Naive thymus-derived CD8-positive, alpha-beta T cell (primary cell): ENCODE measurements at regions of chr10 and their contacts with region 1.

Region 1: GRCh38 chr10:119872860-119873681 is 428 bp upstream of the MCMBP start:
- DNase-seq: peak; percentile 76 to 91 (median 85)
- ATAC-seq: peak; percentile 89 to 91
- H3K4me3 Mint-ChIP-seq: peak overlapping the region; percentile 83 to 94 (median 88)
- H3K27ac Mint-ChIP-seq: peak overlapping the region; percentile 54 to 96 (median 94)
- H3K4me1 Mint-ChIP-seq: peaks cover 19 to 44% (median 34%) of the 10 kb centered on the region in 4 donors
- H3K27me3 Mint-ChIP-seq: no peaks in the 10 kb centered on the region

Region 2: DNA sequence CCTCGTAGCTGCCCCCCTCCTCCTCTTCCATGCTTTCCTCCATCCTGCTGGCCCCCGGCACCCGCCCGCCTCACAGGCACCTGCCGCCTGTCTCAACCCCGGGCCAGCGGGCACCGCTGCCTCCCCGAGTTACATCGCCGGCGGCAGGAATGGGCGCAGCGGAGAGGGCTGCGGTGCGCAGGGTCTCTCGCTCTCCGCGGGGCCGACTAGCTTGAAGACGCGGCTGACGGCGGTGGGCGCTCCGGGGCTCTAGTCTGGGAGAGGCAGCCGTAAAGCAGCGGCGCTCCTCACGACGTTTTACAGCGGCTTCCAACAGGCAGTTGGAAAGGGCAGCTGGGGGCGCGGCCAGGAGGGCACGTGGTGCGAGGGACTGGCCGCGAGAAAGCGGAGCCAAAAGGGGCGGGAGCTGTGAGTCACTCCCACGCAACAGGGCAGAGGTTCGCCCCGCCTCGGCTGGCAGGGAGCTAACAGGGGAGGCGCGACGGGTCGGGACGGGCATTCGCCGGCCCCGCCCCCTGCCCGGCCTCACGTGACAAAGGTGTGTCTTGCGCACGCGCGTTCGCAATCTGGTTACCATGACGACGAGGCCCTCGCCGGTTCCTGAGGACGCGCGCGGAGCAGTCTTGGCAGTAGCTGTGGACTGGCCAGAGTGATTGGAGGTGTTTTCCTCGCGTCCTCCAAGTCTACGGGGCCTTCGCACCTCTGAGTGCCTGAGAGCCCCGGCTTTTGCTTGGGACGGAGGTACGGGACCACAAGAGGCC is 1118.2 kb before region 1 on chr10 and contains the start of gene CACUL1:
- POLR2A ChIA-PET with region 1: interaction called, 10 read pairs
- DNase-seq: peak; percentile 98 to 100 (median 100)
- ATAC-seq: peak; percentile 94 to 97
- H3K4me3 Mint-ChIP-seq: peak within 1 kb of the TSS; percentile 89 to 98 (median 92)
- H3K27ac Mint-ChIP-seq: peak within 1 kb of the TSS; percentile 85 to 97 (median 95)
- H3K4me1 Mint-ChIP-seq: peaks cover 22 to 44% (median 41%) of the 10 kb centered on the region in 4 donors
- H3K27me3 Mint-ChIP-seq: peaks cover 0 to 4% (median 0%) of the 10 kb centered on the region in 5 donors
- polyA plus RNA-seq, gene CACUL1: 23.1 to 29.2 (median 25.4) TPM

Region 3: GRCh38 chr10:119650692-119651513 is 222.2 kb before region 1 on chr10 and contains the start of gene BAG3:
- POLR2A ChIA-PET with region 1: interaction called, 12 read pairs
- DNase-seq: peak; percentile 34 to 86 (median 72)
- ATAC-seq: peak; percentile 57 to 64
- H3K4me3 Mint-ChIP-seq: peak within 1 kb of the TSS; percentile 94 to 99 (median 97)
- H3K27ac Mint-ChIP-seq: peak within 1 kb of the TSS; percentile 90 to 99 (median 97)
- H3K4me1 Mint-ChIP-seq: peaks cover 28 to 45% (median 44%) of the 10 kb centered on the region in 4 donors
- H3K27me3 Mint-ChIP-seq: no peaks in the 10 kb centered on the region
- polyA plus RNA-seq, gene BAG3: 5.1 to 26.5 (median 12.5) TPM

Region 4: GRCh38 chr10:119725828-119726675 is 147.0 kb before region 1 on chr10 and contains the start of gene INPP5F:
- POLR2A ChIA-PET with region 1: interaction called, 22 read pairs
- DNase-seq: peak; percentile 90 to 99 (median 96)
- ATAC-seq: peak; percentile 88 to 92
- H3K4me3 Mint-ChIP-seq: peak within 1 kb of the TSS; percentile 81 to 94 (median 91)
- H3K27ac Mint-ChIP-seq: peak within 1 kb of the TSS; percentile 27 to 93 (median 81)
- H3K4me1 Mint-ChIP-seq: peaks cover 5 to 41% (median 26%) of the 10 kb centered on the region in 4 donors
- H3K27me3 Mint-ChIP-seq: no peaks in the 10 kb centered on the region
- polyA plus RNA-seq, gene INPP5F: 1.4 to 2.5 (median 2.4) TPM

Region 5: DNA sequence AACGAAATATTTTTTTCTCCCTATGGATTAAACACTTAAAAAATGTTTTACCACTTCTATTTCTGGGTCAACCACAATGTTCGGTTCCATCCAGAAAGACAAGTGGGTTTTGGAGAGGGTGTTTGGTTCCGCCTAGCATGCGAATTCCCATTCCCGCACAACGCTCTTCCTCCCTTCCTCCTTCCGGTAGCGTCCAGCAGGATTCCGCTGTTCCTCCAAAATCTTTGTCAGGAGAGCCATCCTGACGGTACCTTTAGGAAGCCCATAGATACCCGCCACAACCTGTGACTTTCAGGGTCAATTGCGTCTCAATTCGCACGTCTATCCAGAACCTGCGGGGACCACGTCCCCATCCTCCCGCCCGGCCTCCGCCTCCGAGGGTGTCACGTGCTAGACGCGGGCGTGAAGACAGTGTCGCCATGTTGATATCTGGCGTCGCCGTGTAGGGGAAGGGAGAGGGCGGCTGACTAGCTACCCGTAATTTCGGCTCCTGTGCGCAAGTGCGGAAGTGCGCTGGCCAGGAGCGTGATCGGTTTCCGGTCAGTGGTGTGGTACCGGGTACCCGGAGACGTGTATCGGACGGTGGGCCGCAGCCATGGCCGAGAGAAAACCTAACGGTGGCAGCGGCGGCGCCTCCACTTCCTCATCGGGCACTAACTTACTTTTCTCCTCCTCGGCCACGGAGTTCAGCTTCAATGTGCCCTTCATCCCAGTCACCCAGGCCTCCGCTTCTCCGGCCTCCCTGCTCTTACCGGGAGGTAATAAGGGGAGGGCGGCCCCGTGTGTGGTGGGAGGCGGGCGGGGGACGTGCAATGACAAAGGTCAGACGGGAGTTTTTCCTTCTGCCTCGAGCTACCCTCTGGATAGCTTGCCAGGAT is 19.4 kb after region 1 on chr10 and contains the start of gene SEC23IP:
- POLR2A ChIA-PET with region 1: interaction called, 67 read pairs
- DNase-seq: peak; percentile 78 to 94 (median 86)
- ATAC-seq: peak; percentile 99
- H3K4me3 Mint-ChIP-seq: peak within 1 kb of the TSS; percentile 93 to 99 (median 98)
- H3K27ac Mint-ChIP-seq: peak within 1 kb of the TSS; percentile 97 to 100 (median 99)
- H3K4me1 Mint-ChIP-seq: peaks cover 21 to 58% (median 53%) of the 10 kb centered on the region in 4 donors
- H3K27me3 Mint-ChIP-seq: no peaks in the 10 kb centered on the region
- polyA plus RNA-seq, gene SEC23IP: 39.6 to 42.3 (median 40.8) TPM